ENCODE measurements at regions of chr19 and their contacts with region 1.

Region 1: DNA sequence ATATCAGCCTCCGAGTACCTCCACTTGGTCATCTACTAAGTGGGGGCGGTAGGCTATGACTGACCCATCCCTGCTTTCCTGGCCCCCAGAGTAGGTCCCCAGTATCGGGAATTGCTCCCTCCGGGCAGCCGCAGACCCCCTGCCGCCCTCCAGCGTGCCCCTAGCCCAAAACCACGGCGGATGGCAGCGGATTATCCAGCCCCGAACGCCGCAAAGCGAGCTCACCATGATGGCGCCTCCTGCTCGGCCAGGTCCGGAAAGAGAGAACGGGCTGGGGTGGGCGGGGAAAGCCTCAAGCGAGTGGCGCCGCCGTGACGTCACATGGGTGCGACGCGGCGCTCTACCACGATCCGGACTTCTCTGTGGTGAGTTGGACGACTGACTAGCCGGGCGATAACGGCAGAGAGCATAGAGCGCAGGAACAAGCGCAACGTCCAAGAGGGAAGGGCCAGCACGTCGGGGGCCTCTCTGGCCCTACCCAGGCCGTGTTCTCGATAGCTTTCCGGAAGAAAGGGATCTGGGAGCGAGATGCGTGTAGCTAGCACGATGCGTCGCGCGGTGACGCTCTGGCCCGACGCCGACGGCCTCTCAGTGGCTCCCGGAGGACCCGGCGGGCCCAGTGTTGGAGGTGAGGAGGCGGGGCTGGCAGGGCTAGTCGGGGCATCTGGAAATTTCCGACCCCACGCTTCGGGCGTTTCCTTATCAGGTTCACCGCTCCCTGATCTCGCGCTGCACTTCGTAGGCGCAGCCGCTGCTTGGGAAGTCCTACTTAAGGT is at the starts of genes RPL18 and SPHK2:
- H3K4me3 Mint-ChIP-seq: peak within 1 kb of the TSS; percentile 97
- H3K27ac Mint-ChIP-seq: peak within 1 kb of the TSS; percentile 96
- H3K4me1 Mint-ChIP-seq: peaks cover 74% of the 10 kb centered on the region
- H3K27me3 Mint-ChIP-seq: no peaks in the 10 kb centered on the region

Region 2: DNA sequence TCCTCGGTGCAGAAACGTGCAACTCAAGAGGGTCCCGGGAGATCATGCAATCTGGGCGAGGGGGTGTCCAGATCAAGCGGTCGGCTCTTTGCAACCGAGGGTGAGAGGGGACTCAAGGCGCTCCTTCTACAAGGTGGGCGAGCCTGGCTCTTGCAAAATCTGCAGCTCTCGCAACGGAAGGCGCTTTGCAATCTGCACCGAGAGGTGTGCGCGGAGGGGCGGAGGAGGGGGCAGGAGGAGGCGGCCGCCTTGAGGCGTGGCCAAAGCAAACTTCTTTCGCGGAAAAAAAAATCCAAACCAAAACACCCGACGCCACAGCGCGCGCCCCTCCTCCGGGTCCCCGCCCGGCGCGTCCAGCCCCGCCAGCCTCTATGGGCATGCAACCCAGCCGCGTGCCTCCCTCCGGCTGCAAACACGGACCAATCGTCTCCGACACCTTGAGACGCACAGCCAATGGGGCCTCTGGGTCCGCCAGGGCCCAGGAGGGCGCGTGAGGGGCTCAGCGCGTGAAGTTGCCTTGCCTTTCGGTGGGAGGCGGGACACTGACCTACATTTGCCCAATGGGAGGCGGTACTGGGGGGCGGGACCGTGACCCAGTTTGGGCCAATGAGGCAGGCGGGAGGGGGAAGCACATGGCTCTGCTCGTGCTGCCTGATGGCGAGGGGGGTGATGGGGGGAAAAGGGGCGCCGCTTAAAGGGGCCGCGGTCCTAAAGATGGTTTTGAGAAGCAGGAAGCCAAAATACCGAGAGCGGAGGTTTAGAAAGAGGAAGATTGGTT is 18.3 kb after region 1 on chr19 and contains the start of gene DBP:
- intact Hi-C with region 1: loop called (anchors 1 kb)
- H3K4me3 Mint-ChIP-seq: peak within 1 kb of the TSS; percentile 99
- H3K27ac Mint-ChIP-seq: peak within 1 kb of the TSS; percentile 94
- H3K4me1 Mint-ChIP-seq: peaks cover 63% of the 10 kb centered on the region
- H3K27me3 Mint-ChIP-seq: no peaks in the 10 kb centered on the region